A673 (cell line): ENCODE measurements at regions of chr5 and their contacts with region 1.

Region 1: DNA sequence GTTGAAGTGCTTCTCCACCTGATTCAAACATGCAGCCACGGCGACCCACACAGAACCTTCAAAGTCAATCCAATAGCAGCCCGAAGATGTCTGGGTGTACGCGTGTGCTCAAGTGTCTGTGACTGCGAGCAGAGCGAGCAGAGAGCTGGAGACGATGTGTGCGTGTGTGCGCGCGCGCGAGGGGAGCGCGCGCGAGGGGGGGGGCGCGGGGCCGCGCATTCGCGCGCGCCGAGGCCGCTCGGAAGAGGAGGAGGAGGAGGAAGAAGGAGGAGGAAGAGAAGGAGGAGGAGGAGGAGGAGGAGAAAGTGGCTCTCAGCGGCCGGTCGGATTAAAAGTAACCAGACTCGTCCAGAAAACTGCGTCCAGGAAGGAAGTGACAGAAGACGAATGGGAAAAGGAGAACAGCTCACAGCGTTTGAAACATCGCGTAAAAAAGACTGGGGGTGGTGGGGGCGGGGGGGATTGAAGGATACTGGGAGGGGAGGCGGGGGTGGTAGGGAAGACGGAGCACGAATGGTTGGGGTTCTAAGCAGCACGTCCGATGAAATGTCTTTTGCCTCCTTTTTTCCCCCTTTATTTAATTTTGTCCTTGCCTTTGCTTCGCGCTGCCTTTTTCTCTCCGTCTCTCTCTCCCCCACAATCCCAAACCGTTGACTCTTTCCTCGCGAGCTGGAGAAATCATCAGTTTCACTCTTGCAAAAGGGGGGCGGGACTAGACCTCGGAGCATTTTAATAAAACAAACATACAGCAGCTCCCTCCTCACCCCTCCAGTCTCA is at the start of gene MEF2C:
- DNase-seq: peak; percentile 83
- H3K4me3 ChIP-seq: peak within 1 kb of the TSS; percentile 61
- H3K27ac ChIP-seq: peak within 1 kb of the TSS; percentile 55
- H3K4me1 ChIP-seq: peaks cover 12% of the 10 kb centered on the region
- H3K27me3 ChIP-seq: peaks cover 10% of the 10 kb centered on the region
- CTCF ChIP-seq: no peak
- total RNA-seq, gene MEF2C: 2.0 and 3.6 TPM in 2 replicates

Region 2: GRCh38 chr5:88785391-88786219 is 97.6 kb before region 1 on chr5:
- CTCF ChIA-PET with region 1: no interaction called
- POLR2A ChIA-PET with region 1: no interaction called
- intact Hi-C with region 1: loop called (anchors 2 kb)
- DNase-seq: peak; percentile 82
- H3K4me3 ChIP-seq: peak overlapping the region; percentile 9
- H3K27ac ChIP-seq: peak overlapping the region; percentile 20
- H3K4me1 ChIP-seq: peaks cover 17% of the 10 kb centered on the region
- H3K27me3 ChIP-seq: no peaks in the 10 kb centered on the region
- CTCF ChIP-seq: no peak

Region 3: GRCh38 chr5:88979244-88979643 is 96.0 kb after region 1 on chr5:
- CTCF ChIA-PET with region 1: no interaction called
- POLR2A ChIA-PET with region 1: no interaction called
- intact Hi-C with region 1: loop called (anchors 5 kb)
- DNase-seq: peak; percentile 93
- H3K4me3 ChIP-seq: no peak overlapping the region
- H3K27ac ChIP-seq: peak overlapping the region; percentile 82
- H3K4me1 ChIP-seq: peaks cover 31% of the 10 kb centered on the region
- H3K27me3 ChIP-seq: no peaks in the 10 kb centered on the region
- CTCF ChIP-seq: no peak

Region 4: DNA sequence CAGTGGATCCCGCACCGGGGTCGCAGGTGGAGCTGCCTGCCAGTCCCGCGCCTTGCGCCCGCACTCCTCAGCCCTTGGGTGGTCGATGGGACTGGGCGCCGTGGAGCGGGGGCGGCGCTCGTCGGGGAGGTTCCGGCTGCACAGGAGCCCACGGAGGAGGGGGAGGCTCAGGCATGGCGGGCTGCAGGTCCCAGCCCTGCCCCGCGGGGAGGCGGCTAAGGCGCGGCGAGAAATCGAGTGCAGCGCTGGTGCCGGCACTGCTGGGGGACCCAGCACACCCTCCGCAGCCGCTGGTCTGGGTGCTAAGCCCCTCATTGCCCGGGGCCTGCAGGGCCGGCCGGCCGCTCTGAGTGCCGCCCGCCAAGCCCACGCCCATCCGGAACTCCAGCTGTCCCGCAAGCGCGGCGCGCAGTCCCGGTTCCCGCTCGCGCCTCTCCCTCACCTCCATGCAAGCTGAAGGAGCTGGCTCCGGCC is 120.4 kb after region 1 on chr5:
- CTCF ChIA-PET with region 1: no interaction called
- POLR2A ChIA-PET with region 1: no interaction called
- intact Hi-C with region 1: no loop called
- DNase-seq: no peak
- H3K4me3 ChIP-seq: no peak overlapping the region
- H3K27ac ChIP-seq: no peak overlapping the region
- H3K4me1 ChIP-seq: no peaks in the 10 kb centered on the region
- H3K27me3 ChIP-seq: no peaks in the 10 kb centered on the region
- CTCF ChIP-seq: no peak

Region 5: DNA sequence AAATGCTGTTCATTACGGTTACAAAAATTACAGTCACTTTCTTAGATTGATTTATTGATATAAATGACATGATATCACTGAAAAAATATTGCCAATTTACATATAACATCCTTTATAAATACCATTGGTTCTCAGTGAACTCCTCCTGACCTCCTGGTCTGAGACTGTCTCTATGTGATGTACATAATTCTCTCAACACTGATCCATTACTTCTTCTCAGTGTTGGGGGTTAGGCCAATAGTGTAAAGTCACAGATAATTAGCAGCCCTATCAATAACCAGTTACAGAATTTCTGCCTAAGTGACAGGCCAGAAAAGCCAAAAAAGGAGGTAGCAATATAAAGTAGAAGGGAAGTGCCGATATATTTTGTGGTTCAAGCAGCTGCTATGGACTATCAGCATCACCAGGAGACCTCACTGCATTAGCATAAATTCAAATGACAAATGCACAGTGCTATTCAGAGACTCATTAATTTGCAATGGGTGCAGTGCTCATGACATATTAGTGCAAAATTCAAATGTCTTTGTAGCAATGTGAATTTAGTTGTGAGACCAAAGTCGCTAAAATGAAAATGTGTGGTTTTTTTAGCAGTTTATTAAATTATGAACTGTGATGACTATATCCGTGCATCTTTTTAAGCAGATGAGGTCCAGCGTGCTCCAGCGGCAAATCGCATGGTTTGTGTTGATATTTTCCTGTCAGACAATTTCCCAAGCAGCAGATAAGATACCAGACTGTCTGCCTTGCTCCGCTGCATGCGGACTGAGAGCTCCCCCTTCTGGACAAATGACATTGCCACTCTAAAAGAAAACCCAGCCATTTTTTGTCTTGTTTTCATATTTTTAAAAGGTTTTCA is 1381.7 kb after region 1 on chr5:
- CTCF ChIA-PET with region 1: no interaction called
- POLR2A ChIA-PET with region 1: no interaction called
- intact Hi-C with region 1: loop called (anchors 10 kb)
- DNase-seq: peak; percentile 78
- H3K4me3 ChIP-seq: no peak overlapping the region
- H3K27ac ChIP-seq: no peak overlapping the region
- H3K4me1 ChIP-seq: peaks cover 3% of the 10 kb centered on the region
- H3K27me3 ChIP-seq: no peaks in the 10 kb centered on the region
- CTCF ChIP-seq: peak; percentile 95